ENCODE measurements at regions of chr17 and their contacts with region 1.

Region 1: GRCh38 chr17:59846394-59847165 is 46.2 kb downstream of the TUBD1 start:
- DNase-seq: peak in 1 of 2 donors; percentile 62
- H3K4me3 ChIP-seq: peak overlapping the region in 2 of 3 donors; percentile 10 to 52
- H3K27ac ChIP-seq: peak overlapping the region; percentile 92 to 95
- H3K4me1 ChIP-seq: peaks cover 3 to 8% of the 10 kb centered on the region in 2 donors
- H3K27me3 ChIP-seq: no peaks in the 10 kb centered on the region
- CTCF ChIP-seq: no peak
- POLR2A ChIP-seq: no peak

Region 2: GRCh38 chr17:59786536-59787319 is 59.9 kb before region 1 on chr17:
- intact Hi-C with region 1: loop called (anchors 10 kb)
- DNase-seq: peak in 1 of 2 donors; percentile 66
- H3K4me3 ChIP-seq: peak overlapping the region in 2 of 3 donors; percentile 21 to 35
- H3K27ac ChIP-seq: peak overlapping the region; percentile 89 to 90
- H3K4me1 ChIP-seq: peaks cover 3 to 19% of the 10 kb centered on the region in 2 donors
- H3K27me3 ChIP-seq: no peaks in the 10 kb centered on the region
- CTCF ChIP-seq: peak in 1 of 3 donors; percentile 40
- POLR2A ChIP-seq: peak; percentile 2